ENCODE measurements at regions of chr6 and their contacts with region 1.

Region 1: DNA sequence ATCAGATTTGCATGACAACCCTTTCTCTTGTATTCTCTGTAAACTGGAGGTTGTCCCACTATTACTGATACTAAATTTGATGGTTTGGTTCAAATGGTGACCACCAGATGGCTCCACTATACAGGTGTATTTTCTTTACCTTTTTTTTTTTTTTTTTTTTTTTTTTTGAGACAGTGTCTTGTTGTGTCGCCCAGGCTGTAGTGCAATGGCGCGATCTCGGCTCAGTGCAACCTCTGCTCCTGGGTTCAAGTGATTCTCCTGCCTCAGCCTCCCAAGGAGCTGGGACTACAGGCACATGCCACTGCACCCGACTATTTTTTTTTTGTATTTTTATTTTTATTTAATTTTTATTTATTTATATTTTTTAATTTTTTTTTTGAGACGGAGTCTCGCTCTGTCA is 6.6 kb upstream of the WTAP start:
- DNase-seq: no peak
- ATAC-seq: peak; percentile 58
- H3K4me3 Mint-ChIP-seq: no peak overlapping the region
- H3K27ac Mint-ChIP-seq: no peak overlapping the region
- H3K4me1 Mint-ChIP-seq: peaks cover 7% of the 10 kb centered on the region
- H3K27me3 Mint-ChIP-seq: no peaks in the 10 kb centered on the region
- CTCF ChIP-seq: no peak

Region 2: DNA sequence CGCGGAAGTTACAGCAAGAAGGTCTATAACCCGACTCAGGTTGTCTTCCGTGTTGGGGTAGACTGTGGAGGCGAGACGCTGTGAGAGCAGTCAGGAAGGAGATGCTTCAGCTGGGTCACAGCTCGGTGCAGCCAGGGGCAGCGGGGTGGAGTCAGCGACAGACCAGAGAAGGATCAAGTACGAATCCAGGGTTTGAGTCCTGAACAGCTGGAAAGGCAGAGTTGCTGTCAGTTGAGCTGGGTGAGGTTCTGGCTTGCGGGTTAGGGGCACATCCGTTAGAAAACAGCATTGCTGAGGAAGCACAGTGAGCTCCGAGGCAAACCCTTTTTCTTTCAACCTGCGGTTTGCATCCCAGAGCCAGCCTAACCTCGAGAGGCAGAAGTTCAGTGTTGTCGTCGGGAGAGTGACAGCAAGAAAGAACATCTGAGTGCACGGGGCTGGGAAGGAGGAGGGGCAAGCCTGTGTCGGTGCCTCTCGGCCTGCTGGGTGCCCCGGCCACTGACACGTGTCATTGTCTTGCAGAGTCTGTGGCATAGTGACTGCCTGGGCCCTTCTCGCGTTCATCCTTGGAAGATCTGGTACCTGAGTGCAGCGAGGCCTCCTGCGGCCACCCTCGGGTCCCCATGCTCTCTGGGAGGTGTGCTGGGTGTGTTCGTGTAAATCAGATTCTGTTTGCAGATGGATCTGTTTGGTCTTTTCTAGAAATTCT is 99.4 kb after region 1 on chr6:
- CTCF ChIA-PET with region 1: no interaction called
- POLR2A ChIA-PET with region 1: no interaction called
- intact Hi-C with region 1: no loop called
- DNase-seq: no peak
- ATAC-seq: peak; percentile 60
- H3K4me3 Mint-ChIP-seq: peak overlapping the region; percentile 69
- H3K27ac Mint-ChIP-seq: no peak overlapping the region
- H3K4me1 Mint-ChIP-seq: peaks cover 21% of the 10 kb centered on the region
- H3K27me3 Mint-ChIP-seq: no peaks in the 10 kb centered on the region
- CTCF ChIP-seq: no peak

Region 3: GRCh38 chr6:159852877-159853276 is 132.2 kb after region 1 on chr6:
- CTCF ChIA-PET with region 1: no interaction called
- POLR2A ChIA-PET with region 1: no interaction called
- intact Hi-C with region 1: loop called (anchors 1 kb)
- DNase-seq: no peak
- ATAC-seq: no peak
- H3K4me3 Mint-ChIP-seq: no peak overlapping the region
- H3K27ac Mint-ChIP-seq: no peak overlapping the region
- H3K4me1 Mint-ChIP-seq: no peaks in the 10 kb centered on the region
- H3K27me3 Mint-ChIP-seq: peaks cover 8% of the 10 kb centered on the region
- CTCF ChIP-seq: no peak

Region 4: GRCh38 chr6:159941286-159942113 is 220.8 kb after region 1 on chr6:
- CTCF ChIA-PET with region 1: no interaction called
- POLR2A ChIA-PET with region 1: no interaction called
- intact Hi-C with region 1: loop called (anchors 1 kb)
- DNase-seq: no peak
- ATAC-seq: peak; percentile 69
- H3K4me3 Mint-ChIP-seq: no peak overlapping the region
- H3K27ac Mint-ChIP-seq: no peak overlapping the region
- H3K4me1 Mint-ChIP-seq: no peaks in the 10 kb centered on the region
- H3K27me3 Mint-ChIP-seq: peaks cover 10% of the 10 kb centered on the region
- CTCF ChIP-seq: no peak

Region 5: DNA sequence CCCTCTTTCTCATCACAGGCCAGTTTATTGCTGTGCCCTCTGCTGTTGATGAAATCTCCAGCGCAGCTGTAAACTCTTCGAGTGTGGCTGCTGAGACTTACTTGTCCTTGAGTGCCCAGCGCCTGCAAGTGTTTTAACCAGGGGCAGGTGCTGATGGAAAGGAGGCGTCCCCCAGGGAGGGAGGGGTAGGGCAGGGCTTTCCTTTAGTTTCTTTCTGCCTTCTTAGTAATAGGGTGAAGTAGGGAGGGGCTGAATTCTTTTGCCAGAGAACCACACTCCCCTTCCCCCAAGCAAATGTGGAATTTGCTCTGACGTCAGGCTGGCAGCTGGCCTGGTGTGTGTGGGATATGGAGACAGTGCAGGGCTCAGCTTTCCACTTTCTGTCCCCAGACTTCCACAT is 309.4 kb after region 1 on chr6:
- CTCF ChIA-PET with region 1: no interaction called
- POLR2A ChIA-PET with region 1: no interaction called
- intact Hi-C with region 1: no loop called
- DNase-seq: no peak
- ATAC-seq: no peak
- H3K4me3 Mint-ChIP-seq: no peak overlapping the region
- H3K27ac Mint-ChIP-seq: no peak overlapping the region
- H3K4me1 Mint-ChIP-seq: peaks cover 24% of the 10 kb centered on the region
- H3K27me3 Mint-ChIP-seq: no peaks in the 10 kb centered on the region
- CTCF ChIP-seq: no peak

Region 6: DNA sequence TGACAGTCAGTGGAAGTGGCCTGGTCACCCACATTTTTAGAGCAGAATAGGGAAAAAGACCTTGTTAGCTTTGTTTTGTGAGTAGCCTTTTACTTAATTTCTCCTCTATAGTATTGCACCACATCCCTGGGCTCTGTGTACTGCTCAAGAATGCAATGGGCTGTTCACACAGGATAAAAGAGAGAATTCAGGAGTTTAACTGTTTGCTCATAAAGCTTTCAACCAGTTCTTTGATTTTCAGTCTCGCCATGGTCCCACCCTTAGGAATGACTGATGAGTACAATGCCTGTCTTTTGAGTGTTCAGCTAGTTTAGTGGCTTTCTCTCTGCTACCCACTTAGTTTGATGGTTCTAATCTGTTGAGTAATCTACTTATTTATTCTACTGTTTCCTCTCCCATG is 1111.0 kb after region 1 on chr6:
- CTCF ChIA-PET with region 1: no interaction called
- POLR2A ChIA-PET with region 1: no interaction called
- intact Hi-C with region 1: no loop called
- DNase-seq: no peak
- ATAC-seq: no peak
- H3K4me3 Mint-ChIP-seq: no peak overlapping the region
- H3K27ac Mint-ChIP-seq: no peak overlapping the region
- H3K4me1 Mint-ChIP-seq: no peaks in the 10 kb centered on the region
- H3K27me3 Mint-ChIP-seq: no peaks in the 10 kb centered on the region
- CTCF ChIP-seq: no peak